CD4-positive, alpha-beta memory T cell (primary cell): ENCODE measurements at regions of chr18 and their contacts with region 1.

Region 1: GRCh38 chr18:46073474-46074331 is 1.6 kb upstream of the PSTPIP2 start:
- DNase-seq: peak; percentile 63 to 75 (median 68)
- H3K4me3 ChIP-seq: no peak overlapping the region
- H3K4me3 Mint-ChIP-seq: peak overlapping the region in 7 of 8 donors; percentile 22 to 89 (median 83)
- H3K27ac ChIP-seq: no peak overlapping the region
- H3K27ac Mint-ChIP-seq: peak overlapping the region in 2 of 7 donors; percentile 19 to 76
- H3K4me1 ChIP-seq: peaks cover 43% of the 10 kb centered on the region
- H3K4me1 Mint-ChIP-seq: peaks cover 25 to 42% (median 34%) of the 10 kb centered on the region in 4 donors
- H3K27me3 ChIP-seq: no peaks in the 10 kb centered on the region
- H3K27me3 Mint-ChIP-seq: no peaks in the 10 kb centered on the region

Region 2: DNA sequence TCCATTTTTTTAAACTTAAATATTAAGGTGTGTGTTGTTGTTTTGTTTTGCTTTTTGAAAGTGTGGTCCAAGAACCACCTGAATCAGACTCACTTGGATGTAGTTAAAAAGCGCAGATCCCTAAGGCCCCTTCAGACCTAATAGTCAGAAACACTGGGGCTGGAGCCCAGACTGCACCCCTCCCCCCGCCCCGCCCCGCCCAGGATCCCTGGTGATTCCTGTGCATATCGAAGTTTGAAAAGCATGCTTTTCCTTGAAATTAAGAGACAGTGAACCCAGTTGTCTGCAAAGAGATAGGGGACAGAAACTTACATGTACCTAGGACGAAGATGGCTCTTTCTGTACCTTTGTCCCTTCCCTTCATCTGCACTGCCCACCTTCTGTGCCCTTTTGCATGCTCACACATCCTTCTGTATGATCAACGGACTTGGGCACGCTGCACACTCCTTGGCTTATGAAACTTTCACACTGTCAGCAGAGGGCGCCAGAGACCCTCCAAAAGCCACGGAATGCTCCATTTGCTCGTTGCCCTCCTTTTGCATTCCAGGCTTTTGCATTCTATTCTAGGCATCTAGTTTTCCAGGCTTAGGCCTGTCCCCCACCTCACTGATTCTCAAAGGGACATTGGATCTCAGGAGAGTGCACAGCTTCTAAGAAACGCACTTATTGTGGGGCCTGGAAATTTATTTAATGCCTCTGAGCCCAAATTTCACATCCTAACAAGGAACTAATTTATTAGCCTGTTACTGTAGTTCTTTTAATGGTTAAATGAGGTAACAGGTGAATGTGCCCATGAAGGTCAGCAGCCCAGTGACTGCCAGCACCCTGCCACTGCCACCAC is 382.5 kb before region 1 on chr18:
- CTCF ChIA-PET with region 1: interaction called, 22 read pairs
- POLR2A ChIA-PET with region 1: interaction called, 5 read pairs
- intact Hi-C with region 1: loop called (anchors 1 kb)
- DNase-seq: peak; percentile 67 to 72 (median 68)
- H3K4me3 ChIP-seq: no peak overlapping the region
- H3K4me3 Mint-ChIP-seq: peak overlapping the region in 2 of 8 donors; percentile 59 to 61
- H3K27ac ChIP-seq: no peak overlapping the region
- H3K27ac Mint-ChIP-seq: peak overlapping the region in 3 of 7 donors; percentile 19 to 82 (median 49)
- H3K4me1 ChIP-seq: peaks cover 53% of the 10 kb centered on the region
- H3K4me1 Mint-ChIP-seq: peaks cover 39 to 51% (median 43%) of the 10 kb centered on the region in 4 donors
- H3K27me3 ChIP-seq: no peaks in the 10 kb centered on the region
- H3K27me3 Mint-ChIP-seq: peaks cover 0 to 3% of the 10 kb centered on the region in 2 donors

Region 3: DNA sequence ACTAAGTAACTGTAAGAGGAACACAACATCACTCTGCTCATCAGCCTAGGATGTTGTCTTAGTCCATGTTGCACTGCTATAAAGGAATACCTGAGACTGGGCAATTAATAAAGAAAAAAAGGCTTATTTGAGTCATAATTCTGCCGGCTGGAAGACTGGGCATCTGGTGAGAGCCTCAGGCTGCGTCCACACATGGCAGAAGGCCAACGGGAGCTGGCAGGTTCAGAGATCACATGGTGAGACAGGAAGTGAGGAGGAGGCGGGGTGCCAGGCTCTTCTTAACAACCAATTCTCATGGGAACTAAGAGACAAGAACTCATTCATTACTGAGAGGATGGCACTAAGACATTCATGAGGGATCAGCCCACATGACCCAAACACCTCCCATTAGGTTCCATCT is 153.3 kb before region 1 on chr18:
- CTCF ChIA-PET with region 1: interaction called, 32 read pairs
- POLR2A ChIA-PET with region 1: interaction called, 3 read pairs
- intact Hi-C with region 1: loop called (anchors 1 kb)
- DNase-seq: no peak
- H3K4me3 ChIP-seq: no peak overlapping the region
- H3K4me3 Mint-ChIP-seq: no peak overlapping the region
- H3K27ac ChIP-seq: no peak overlapping the region
- H3K27ac Mint-ChIP-seq: peak overlapping the region in 4 of 7 donors; percentile 31 to 81 (median 46)
- H3K4me1 ChIP-seq: peaks cover 10% of the 10 kb centered on the region
- H3K4me1 Mint-ChIP-seq: peaks cover 15 to 24% (median 18%) of the 10 kb centered on the region in 4 donors
- H3K27me3 ChIP-seq: no peaks in the 10 kb centered on the region
- H3K27me3 Mint-ChIP-seq: no peaks in the 10 kb centered on the region

Region 4: GRCh38 chr18:45967007-45967706 is 106.5 kb before region 1 on chr18 and contains the start of gene EPG5:
- CTCF ChIA-PET with region 1: interaction called, 12 read pairs
- POLR2A ChIA-PET with region 1: interaction called, 8 read pairs
- intact Hi-C with region 1: loop called (anchors 2 kb)
- DNase-seq: peak; percentile 89 to 94 (median 91)
- H3K4me3 ChIP-seq: peak within 1 kb of the TSS; percentile 89 to 94
- H3K4me3 Mint-ChIP-seq: peak within 1 kb of the TSS; percentile 95 to 100 (median 98)
- H3K27ac ChIP-seq: peak within 1 kb of the TSS; percentile 72
- H3K27ac Mint-ChIP-seq: peak within 1 kb of the TSS; percentile 89 to 98 (median 97)
- H3K4me1 ChIP-seq: peaks cover 48% of the 10 kb centered on the region
- H3K4me1 Mint-ChIP-seq: peaks cover 31 to 55% (median 42%) of the 10 kb centered on the region in 4 donors
- H3K27me3 ChIP-seq: no peaks in the 10 kb centered on the region
- H3K27me3 Mint-ChIP-seq: no peaks in the 10 kb centered on the region
- total RNA-seq, gene EPG5: 64.3 to 69.0 TPM

Region 5: DNA sequence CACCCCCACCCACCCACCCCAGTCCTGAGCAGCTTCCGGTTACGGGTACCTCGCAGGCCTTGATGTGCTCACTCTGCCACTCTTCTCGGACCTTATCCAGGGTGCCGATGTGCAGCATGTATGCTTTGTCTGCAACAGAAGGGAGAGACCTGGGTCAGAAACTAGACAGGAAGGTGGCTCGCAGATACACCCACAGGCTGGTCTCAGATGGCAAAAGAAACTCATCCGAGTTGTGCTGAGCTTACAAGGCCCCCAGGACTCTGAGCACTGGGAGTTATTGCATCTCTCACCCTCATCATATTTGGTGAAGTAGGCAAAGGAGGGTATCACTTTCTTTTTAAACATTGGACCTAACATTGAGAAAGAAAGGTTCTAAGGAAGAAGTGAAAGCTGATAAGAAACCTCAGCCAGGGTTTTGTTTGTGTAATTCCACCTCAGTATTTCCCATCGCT is 76.0 kb before region 1 on chr18:
- CTCF ChIA-PET with region 1: interaction called, 24 read pairs
- POLR2A ChIA-PET with region 1: interaction called, 28 read pairs
- intact Hi-C with region 1: loop called (anchors 5 kb)
- DNase-seq: peak; percentile 10 to 48 (median 20)
- H3K4me3 ChIP-seq: peak overlapping the region; percentile 36 to 80
- H3K4me3 Mint-ChIP-seq: peak overlapping the region; percentile 41 to 89 (median 77)
- H3K27ac ChIP-seq: peak overlapping the region; percentile 52
- H3K27ac Mint-ChIP-seq: peak overlapping the region; percentile 86 to 94 (median 90)
- H3K4me1 ChIP-seq: peaks cover 55% of the 10 kb centered on the region
- H3K4me1 Mint-ChIP-seq: peaks cover 40 to 66% (median 54%) of the 10 kb centered on the region in 4 donors
- H3K27me3 ChIP-seq: no peaks in the 10 kb centered on the region
- H3K27me3 Mint-ChIP-seq: no peaks in the 10 kb centered on the region

Region 6: DNA sequence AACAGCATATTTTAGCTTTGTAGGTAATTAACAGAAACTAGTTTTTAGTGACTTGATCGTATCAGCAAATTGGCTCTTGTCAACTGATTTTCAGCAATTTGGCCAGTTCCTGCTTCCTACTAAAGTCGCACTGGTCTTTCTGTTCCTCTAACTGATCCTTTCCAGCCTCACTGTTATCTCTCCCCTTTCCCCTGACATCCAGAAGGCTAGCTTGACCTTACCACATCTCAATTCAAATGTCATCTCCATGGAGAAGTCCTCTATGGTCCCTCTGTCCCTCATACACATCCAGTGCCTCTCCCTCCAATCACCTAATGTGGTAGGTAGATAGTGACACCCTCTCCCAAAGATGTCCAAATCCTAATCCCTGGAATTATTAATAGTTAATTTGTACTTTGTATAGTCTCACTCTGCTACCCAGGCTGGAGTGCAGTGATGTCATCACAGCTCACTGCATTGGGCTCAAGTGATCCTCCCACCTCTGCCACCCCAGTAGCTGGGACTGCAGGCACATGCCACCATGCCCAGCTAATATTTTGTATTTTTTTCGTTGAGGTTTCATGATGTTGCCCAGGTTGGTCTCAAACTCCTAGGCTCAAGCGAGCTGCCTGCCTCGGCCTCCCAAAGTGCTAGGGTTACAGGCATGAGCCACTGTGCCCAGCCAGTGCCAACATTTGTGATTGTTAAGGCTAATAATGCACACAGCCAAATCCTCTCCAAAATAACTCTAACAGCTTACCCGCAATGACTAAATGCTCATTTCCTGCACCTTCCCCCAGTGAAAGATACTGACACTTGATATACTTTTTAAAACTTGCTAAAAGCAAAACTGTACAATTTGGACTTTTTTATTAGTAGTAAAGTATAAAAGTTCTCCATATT is 18.5 kb before region 1 on chr18:
- CTCF ChIA-PET with region 1: interaction called, 30 read pairs
- POLR2A ChIA-PET with region 1: interaction called, 12 read pairs
- intact Hi-C with region 1: no loop called
- DNase-seq: peak in 1 of 5 donors; percentile 21
- H3K4me3 ChIP-seq: no peak overlapping the region
- H3K4me3 Mint-ChIP-seq: peak overlapping the region in 7 of 8 donors; percentile 21 to 74 (median 68)
- H3K27ac ChIP-seq: no peak overlapping the region
- H3K27ac Mint-ChIP-seq: peak overlapping the region; percentile 72 to 93 (median 89)
- H3K4me1 ChIP-seq: peaks cover 29% of the 10 kb centered on the region
- H3K4me1 Mint-ChIP-seq: peaks cover 31 to 50% (median 40%) of the 10 kb centered on the region in 4 donors
- H3K27me3 ChIP-seq: no peaks in the 10 kb centered on the region
- H3K27me3 Mint-ChIP-seq: no peaks in the 10 kb centered on the region

Region 7: GRCh38 chr18:46097801-46098615 is 24.3 kb after region 1 on chr18 and contains the start of gene ATP5F1A:
- CTCF ChIA-PET with region 1: interaction called, 12 read pairs
- POLR2A ChIA-PET with region 1: interaction called, 4 read pairs
- intact Hi-C with region 1: no loop called
- DNase-seq: peak; percentile 82 to 90 (median 86)
- H3K4me3 ChIP-seq: peak within 1 kb of the TSS; percentile 39 to 95
- H3K4me3 Mint-ChIP-seq: peak within 1 kb of the TSS; percentile 92 to 99 (median 98)
- H3K27ac ChIP-seq: peak within 1 kb of the TSS; percentile 93
- H3K27ac Mint-ChIP-seq: peak within 1 kb of the TSS; percentile 94 to 99 (median 98)
- H3K4me1 ChIP-seq: peaks cover 47% of the 10 kb centered on the region
- H3K4me1 Mint-ChIP-seq: peaks cover 14 to 40% (median 25%) of the 10 kb centered on the region in 4 donors
- H3K27me3 ChIP-seq: no peaks in the 10 kb centered on the region
- H3K27me3 Mint-ChIP-seq: no peaks in the 10 kb centered on the region
- total RNA-seq, gene ATP5F1A: 212 to 225 TPM

Region 8: DNA sequence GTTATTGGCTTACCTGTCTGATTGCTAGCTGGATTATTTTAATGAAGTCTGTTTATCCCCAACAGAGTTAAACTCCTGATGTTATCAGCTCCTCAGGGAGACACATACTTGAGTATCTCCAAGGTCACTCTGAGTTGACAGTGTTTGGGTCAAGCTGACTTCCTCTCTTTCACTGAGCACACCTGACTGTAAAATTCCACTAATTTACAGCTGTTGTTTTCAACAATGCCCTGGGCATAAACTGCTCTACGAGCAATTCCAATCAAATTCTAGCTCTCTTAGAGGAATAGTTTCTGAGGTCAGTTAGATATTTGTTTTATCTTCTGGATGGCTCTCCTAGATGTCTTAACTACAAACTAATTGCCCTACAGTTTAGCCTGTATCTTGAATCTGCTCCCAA is 40.1 kb after region 1 on chr18:
- CTCF ChIA-PET with region 1: no interaction called
- POLR2A ChIA-PET with region 1: no interaction called
- intact Hi-C with region 1: no loop called
- DNase-seq: no peak
- H3K4me3 ChIP-seq: no peak overlapping the region
- H3K4me3 Mint-ChIP-seq: no peak overlapping the region
- H3K27ac ChIP-seq: no peak overlapping the region
- H3K27ac Mint-ChIP-seq: no peak overlapping the region
- H3K4me1 ChIP-seq: no peaks in the 10 kb centered on the region
- H3K4me1 Mint-ChIP-seq: peaks cover 0 to 10% (median 5%) of the 10 kb centered on the region in 4 donors
- H3K27me3 ChIP-seq: no peaks in the 10 kb centered on the region
- H3K27me3 Mint-ChIP-seq: no peaks in the 10 kb centered on the region